ENCODE measurements at regions of chr1 and their contacts with region 1.

Region 1: GRCh38 chr1:13960375-13960987 is 260.5 kb downstream of the PRDM2 start:
- DNase-seq: peak; percentile 50 to 90 (median 78)
- ATAC-seq: peak; percentile 93
- H3K4me3 ChIP-seq: no peak overlapping the region
- H3K4me1 ChIP-seq: no peaks in the 10 kb centered on the region
- CTCF ChIP-seq: peak; percentile 92

Region 2: DNA sequence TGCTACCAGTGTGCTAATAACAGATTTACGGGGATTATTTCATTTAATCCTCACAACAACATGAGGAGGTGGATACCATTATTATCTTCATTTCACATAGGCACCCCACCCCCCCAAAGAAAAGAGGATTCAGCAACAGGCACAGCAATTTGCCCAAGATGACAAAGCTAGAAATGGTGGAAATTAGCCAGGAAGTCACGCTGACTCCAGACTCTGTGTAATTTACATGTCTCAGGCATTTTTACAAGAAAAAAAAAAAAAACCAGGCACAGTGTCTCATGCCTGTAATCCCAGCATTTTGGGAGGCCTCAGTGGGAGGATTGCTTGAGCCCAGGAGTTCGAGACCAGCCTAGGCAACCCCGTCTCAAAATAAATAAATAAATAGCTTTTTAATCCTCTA is 298.0 kb before region 1 on chr1:
- intact Hi-C with region 1: loop called (anchors 2 to 5 kb)
- DNase-seq: peak in 1 of 3 donors; percentile 16
- ATAC-seq: no peak
- H3K4me3 ChIP-seq: no peak overlapping the region
- H3K4me1 ChIP-seq: no peaks in the 10 kb centered on the region
- CTCF ChIP-seq: no peak

Region 3: DNA sequence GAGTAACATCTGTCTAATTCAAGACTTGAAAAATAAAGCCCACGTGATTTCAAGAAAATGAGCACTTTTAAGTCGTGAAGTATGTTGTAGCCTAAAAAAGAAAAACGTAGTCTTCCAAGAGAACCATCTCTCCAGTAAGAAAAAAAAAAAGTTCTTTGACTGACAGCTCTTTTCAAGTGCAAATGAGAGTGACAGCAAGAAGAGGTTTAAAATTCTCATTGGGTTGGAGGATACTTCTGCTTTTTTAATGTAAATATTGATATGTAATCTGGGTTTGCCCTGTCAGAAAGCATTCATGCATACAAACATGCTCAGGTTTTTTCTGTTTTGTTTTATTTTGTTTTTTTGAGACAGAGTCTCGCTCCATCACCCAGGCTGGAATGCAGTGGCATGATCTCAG is 292.8 kb before region 1 on chr1:
- intact Hi-C with region 1: loop called (anchors 2 to 5 kb)
- DNase-seq: no peak
- ATAC-seq: peak; percentile 25
- H3K4me3 ChIP-seq: no peak overlapping the region
- H3K4me1 ChIP-seq: no peaks in the 10 kb centered on the region
- CTCF ChIP-seq: no peak

Region 4: DNA sequence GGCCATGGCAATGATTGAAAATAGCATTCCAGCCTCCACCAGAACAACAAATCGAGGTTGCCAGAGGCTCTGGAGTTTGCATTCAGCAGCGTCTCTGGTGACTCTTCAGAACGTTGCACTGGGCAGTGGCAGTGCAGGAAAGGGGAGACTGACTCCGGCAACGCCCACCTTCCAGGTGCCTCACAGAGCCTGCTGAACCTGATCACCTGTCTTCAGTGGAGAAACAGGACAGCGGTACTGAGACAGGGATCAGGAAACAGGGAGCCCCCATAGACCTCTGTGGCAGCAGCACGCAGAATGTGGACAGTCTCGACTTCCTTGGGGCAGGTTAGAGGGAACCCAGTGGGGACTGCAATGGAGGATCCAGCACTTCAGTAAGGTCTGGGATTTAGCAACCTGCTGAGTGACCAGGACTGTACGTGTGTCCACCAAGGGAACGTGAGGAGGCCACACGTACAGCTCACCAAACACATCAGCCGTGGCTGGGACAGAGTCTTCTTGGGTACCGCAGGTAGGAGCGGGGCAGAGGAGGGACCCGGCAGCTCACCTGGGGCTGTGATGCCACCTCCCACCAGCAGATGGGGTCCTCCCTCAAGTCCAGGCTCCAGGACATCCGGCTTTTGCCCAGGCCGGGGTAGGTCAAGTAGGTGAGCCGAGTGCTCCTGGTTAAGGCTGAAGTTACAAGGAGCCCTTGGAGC is 131.9 kb before region 1 on chr1:
- intact Hi-C with region 1: loop called in 1 of 2 experiments (anchors 2 kb)
- DNase-seq: peak; percentile 85 to 93 (median 90)
- ATAC-seq: peak; percentile 93
- H3K4me3 ChIP-seq: no peak overlapping the region
- H3K4me1 ChIP-seq: peaks cover 5% of the 10 kb centered on the region
- CTCF ChIP-seq: peak; percentile 40

Measured in mucosa of descending colon (tissue), 3 donors.